ENCODE measurements at regions of chr10 and their contacts with region 1.

Region 1: DNA sequence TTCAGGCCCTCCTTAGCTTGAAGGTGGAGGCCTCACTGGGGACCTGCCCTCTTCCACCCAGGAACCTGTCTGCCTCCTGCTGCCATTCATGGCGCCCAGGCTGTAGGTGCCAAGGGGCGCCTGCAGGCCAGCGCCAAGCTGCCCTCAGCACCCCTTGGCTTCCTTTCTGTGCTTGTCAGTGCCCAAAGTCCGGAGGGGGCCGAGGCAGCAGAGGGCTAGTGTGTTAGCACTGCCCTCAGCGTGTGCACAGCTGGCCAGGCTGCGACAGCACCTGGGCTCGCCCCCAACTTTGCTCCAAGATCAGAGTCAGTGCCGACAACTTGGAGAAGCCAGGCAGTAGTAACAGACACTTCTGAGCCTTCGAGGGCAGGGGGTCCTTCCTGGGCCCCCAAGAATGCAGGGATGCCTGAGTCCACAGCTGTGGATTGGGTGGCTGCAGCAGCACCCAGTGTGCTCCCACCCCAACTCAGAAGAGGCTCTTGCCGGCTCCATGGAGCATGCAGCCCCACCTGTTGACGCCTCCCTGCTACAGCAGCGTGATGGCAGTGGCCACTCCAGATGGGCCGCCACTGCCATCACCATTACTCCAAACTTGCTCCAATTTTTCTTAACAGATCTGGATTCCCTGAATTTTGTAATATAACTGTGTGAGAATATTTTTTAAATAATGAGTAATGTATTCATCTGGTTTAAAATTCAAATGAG is 41.7 kb downstream of the CACUL1 start:
- DNase-seq: no peak
- ATAC-seq: peak in 1 of 4 donors; percentile 25
- H3K4me3 ChIP-seq: no peak overlapping the region
- H3K27ac ChIP-seq: no peak overlapping the region
- H3K4me1 ChIP-seq: no peaks in the 10 kb centered on the region
- H3K27me3 ChIP-seq: no peaks in the 10 kb centered on the region
- CTCF ChIP-seq: no peak
- POLR2A ChIP-seq: no peak

Region 2: DNA sequence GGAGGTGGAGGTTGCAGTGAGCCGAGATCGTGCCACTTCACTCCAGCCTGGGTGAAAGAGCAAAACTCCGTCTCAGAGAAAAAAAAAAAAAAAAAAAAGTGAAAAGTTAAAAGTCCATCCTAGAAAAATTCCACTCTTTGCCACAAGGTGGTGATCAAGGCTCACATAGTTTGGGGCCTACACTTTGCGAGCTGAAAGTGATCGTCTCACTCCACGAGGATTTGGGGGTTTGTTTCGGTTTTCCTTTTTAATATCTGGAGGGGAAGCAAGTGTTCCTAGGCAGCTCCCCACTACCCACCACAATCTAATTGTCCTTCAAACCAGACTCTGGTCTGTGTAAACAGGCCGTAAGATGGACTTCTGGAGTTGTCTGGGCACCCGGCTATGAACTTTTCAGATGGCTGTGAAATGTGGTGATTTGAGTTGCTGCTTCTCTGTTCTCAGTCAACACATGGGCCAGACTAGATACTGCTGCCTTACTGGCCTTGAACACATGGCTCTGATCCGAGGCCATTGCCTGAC is 144.7 kb before region 1 on chr10:
- intact Hi-C with region 1: loop called in 1 of 2 experiments (anchors 10 kb)
- DNase-seq: no peak
- ATAC-seq: peak; percentile 68 to 78 (median 74)
- H3K4me3 ChIP-seq: no peak overlapping the region
- H3K27ac ChIP-seq: no peak overlapping the region
- H3K4me1 ChIP-seq: no peaks in the 10 kb centered on the region
- H3K27me3 ChIP-seq: no peaks in the 10 kb centered on the region
- CTCF ChIP-seq: peak; percentile 58 to 75 (median 66)
- POLR2A ChIP-seq: no peak

Measured in right lobe of liver (tissue), 6 donors.